CD8-positive, alpha-beta T cell (primary cell): ENCODE measurements at regions of chr11 and their contacts with region 1.

Region 1: GRCh38 chr11:37390576-37391083 is 792.6 kb upstream of the RAG2 start:
- DNase-seq: no peak
- ATAC-seq: no peak
- H3K4me3 ChIP-seq: no peak overlapping the region
- H3K4me3 Mint-ChIP-seq: no peak overlapping the region
- H3K27ac ChIP-seq: no peak overlapping the region
- H3K27ac Mint-ChIP-seq: no peak overlapping the region
- H3K4me1 ChIP-seq: no peaks in the 10 kb centered on the region
- H3K4me1 Mint-ChIP-seq: no peaks in the 10 kb centered on the region
- H3K27me3 ChIP-seq: peaks cover 0 to 2% of the 10 kb centered on the region in 2 experiments
- H3K27me3 Mint-ChIP-seq: no peaks in the 10 kb centered on the region
- CTCF ChIP-seq: no peak

Region 2: GRCh38 chr11:37343290-37343689 is 47.3 kb before region 1 on chr11:
- CTCF ChIA-PET with region 1: no interaction called
- POLR2A ChIA-PET with region 1: no interaction called
- intact Hi-C with region 1: loop called in 1 of 2 experiments (anchors 1 kb)
- DNase-seq: no peak
- ATAC-seq: no peak
- H3K4me3 ChIP-seq: no peak overlapping the region
- H3K4me3 Mint-ChIP-seq: no peak overlapping the region
- H3K27ac ChIP-seq: no peak overlapping the region
- H3K27ac Mint-ChIP-seq: no peak overlapping the region
- H3K4me1 ChIP-seq: no peaks in the 10 kb centered on the region
- H3K4me1 Mint-ChIP-seq: no peaks in the 10 kb centered on the region
- H3K27me3 ChIP-seq: no peaks in the 10 kb centered on the region
- H3K27me3 Mint-ChIP-seq: no peaks in the 10 kb centered on the region
- CTCF ChIP-seq: no peak

Region 3: GRCh38 chr11:37352485-37352884 is 38.1 kb before region 1 on chr11:
- CTCF ChIA-PET with region 1: no interaction called
- POLR2A ChIA-PET with region 1: no interaction called
- intact Hi-C with region 1: loop called in 1 of 2 experiments (anchors 1 kb)
- DNase-seq: no peak
- ATAC-seq: no peak
- H3K4me3 ChIP-seq: no peak overlapping the region
- H3K4me3 Mint-ChIP-seq: no peak overlapping the region
- H3K27ac ChIP-seq: no peak overlapping the region
- H3K27ac Mint-ChIP-seq: no peak overlapping the region
- H3K4me1 ChIP-seq: no peaks in the 10 kb centered on the region
- H3K4me1 Mint-ChIP-seq: no peaks in the 10 kb centered on the region
- H3K27me3 ChIP-seq: no peaks in the 10 kb centered on the region
- H3K27me3 Mint-ChIP-seq: no peaks in the 10 kb centered on the region
- CTCF ChIP-seq: no peak